GM12878 (cell line): ENCODE measurements at regions of chr2 and their contacts with region 1.

Region 1: GRCh38 chr2:10072656-10073480 is 7.3 kb downstream of the CYS1 start:
- DNase-seq: no peak
- ATAC-seq: peak; percentile 96
- H3K4me3 ChIP-seq: no peak overlapping the region
- H3K27ac ChIP-seq: no peak overlapping the region
- H3K4me1 ChIP-seq: peaks cover 21% of the 10 kb centered on the region
- H3K27me3 ChIP-seq: no peaks in the 10 kb centered on the region
- CTCF ChIP-seq: peak; percentile 84 to 94 (median 86); a peak in 5 of 6 replicates
- EP300 ChIP-seq: no peak
- POLR2A ChIP-seq: no peak
- RAD21 ChIP-seq: peak; percentile 92

Region 2: GRCh38 chr2:10091182-10091888 is 18.5 kb after region 1 on chr2:
- CTCF ChIA-PET with region 1: interaction called, 983 read pairs
- POLR2A ChIA-PET with region 1: interaction called, 73 read pairs
- RAD21 ChIA-PET with region 1: interaction called, 216 read pairs
- SMC1A ChIA-PET with region 1: interaction called, 236 read pairs
- in situ Hi-C with region 1: no loop called
- intact Hi-C with region 1: no loop called
- DNase-seq: no peak
- ATAC-seq: peak; percentile 71
- H3K4me3 ChIP-seq: no peak overlapping the region; the same call in 1 of the 2 replicates
- H3K27ac ChIP-seq: no peak overlapping the region
- H3K4me1 ChIP-seq: peaks cover 18% of the 10 kb centered on the region
- H3K27me3 ChIP-seq: no peaks in the 10 kb centered on the region
- CTCF ChIP-seq: peak in 1 of 3 experiments; percentile 29; a peak in 1 of 6 replicates
- EP300 ChIP-seq: no peak
- POLR2A ChIP-seq: no peak
- RAD21 ChIP-seq: no peak

Region 3: GRCh38 chr2:10097352-10098148 is 24.7 kb after region 1 on chr2:
- CTCF ChIA-PET with region 1: interaction called, 983 read pairs
- POLR2A ChIA-PET with region 1: interaction called, 73 read pairs
- RAD21 ChIA-PET with region 1: interaction called, 216 read pairs
- SMC1A ChIA-PET with region 1: interaction called, 236 read pairs
- in situ Hi-C with region 1: no loop called
- intact Hi-C with region 1: loop called (anchors 1 kb)
- DNase-seq: no peak
- ATAC-seq: peak; percentile 96
- H3K4me3 ChIP-seq: no peak overlapping the region
- H3K27ac ChIP-seq: no peak overlapping the region
- H3K4me1 ChIP-seq: peaks cover 2% of the 10 kb centered on the region; the same call in 1 of the 2 replicates
- H3K27me3 ChIP-seq: no peaks in the 10 kb centered on the region
- CTCF ChIP-seq: peak; percentile 91 to 99 (median 92)
- EP300 ChIP-seq: no peak
- POLR2A ChIP-seq: no peak
- RAD21 ChIP-seq: peak; percentile 80

Region 4: DNA sequence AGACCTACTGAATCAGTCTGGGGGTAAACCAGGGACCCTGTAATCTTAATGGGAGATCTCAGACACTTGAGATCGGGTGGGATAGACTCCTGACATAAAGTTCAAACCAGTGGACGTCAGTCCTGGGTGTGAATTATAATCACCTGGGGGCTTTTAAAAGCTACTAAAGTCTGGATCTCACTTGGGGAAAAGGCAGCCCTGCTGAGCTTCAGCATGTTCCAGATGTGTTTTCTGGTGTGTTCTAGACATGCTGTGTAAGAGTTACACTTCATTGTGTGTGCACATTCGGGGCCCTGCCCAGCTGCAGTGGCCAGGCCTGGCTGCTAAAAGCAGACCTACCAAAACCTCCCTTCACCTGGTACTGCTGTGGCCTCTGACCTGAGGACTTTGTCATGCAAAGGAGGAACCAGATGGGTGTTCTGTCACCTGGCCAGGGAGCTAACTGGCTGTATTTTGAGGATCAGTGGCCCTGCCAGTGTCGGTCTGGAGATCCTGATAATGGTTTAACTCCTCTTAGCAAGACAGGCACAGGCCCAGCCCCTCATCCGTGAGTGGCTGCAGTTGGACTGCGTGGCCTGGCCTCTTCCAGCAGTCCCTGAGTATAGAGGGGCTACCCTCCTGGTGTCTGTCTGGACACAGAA is 60.3 kb after region 1 on chr2:
- CTCF ChIA-PET with region 1: interaction called, 15 read pairs
- POLR2A ChIA-PET with region 1: interaction called, 4 read pairs
- RAD21 ChIA-PET with region 1: interaction called, 15 read pairs
- SMC1A ChIA-PET with region 1: interaction called, 11 read pairs
- in situ Hi-C with region 1: no loop called
- intact Hi-C with region 1: no loop called
- DNase-seq: no peak
- ATAC-seq: peak; percentile 8
- H3K4me3 ChIP-seq: no peak overlapping the region
- H3K27ac ChIP-seq: no peak overlapping the region
- H3K4me1 ChIP-seq: no peaks in the 10 kb centered on the region
- H3K27me3 ChIP-seq: no peaks in the 10 kb centered on the region
- CTCF ChIP-seq: no peak
- EP300 ChIP-seq: no peak
- POLR2A ChIP-seq: peak; percentile 66
- RAD21 ChIP-seq: no peak

Region 5: DNA sequence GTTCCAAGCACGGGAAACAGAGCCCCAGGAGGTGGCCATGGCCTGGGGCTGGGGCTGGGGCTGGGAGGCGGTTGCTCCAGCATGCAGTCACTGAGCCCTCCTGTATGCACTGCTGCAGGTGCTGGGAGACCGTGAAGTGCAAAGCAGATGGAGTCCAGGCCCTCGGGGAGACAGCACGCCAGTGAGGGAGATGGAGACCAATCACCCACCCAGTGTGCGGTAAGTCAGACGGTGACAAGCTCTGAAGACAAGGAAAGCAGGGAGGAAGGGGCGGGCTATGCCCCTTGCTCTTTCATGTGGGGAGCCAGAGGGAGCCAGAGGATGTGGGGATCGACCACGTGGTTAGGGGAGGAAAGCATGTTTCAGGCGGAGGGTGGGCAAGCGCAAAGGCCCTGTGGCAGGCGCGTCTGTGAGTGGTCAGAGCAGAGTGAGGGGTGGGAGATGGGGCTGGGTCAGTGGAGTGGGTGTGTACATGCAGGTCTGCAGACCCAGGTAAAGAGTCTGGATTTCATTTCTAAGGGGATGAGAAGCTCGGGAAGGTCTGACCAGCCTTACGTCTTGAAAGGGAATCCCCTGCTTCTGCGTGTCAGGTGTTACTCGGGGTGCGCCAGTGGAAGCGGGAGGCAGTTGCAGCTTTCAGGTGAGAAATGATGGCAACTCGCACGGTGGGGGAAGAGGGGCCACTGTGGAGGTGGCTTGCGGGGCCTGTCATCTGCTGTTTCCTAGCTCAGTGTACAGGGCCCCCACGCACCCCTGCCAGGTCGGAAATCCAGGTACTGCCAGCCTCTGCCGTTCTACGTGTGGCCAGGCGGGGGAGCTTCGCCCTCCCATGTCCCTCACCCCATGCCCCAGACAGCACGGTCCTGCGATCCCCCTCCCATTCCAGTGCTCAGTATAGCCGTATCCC is 69.1 kb after region 1 on chr2:
- CTCF ChIA-PET with region 1: interaction called, 5 read pairs
- POLR2A ChIA-PET with region 1: no interaction called
- RAD21 ChIA-PET with region 1: interaction called, 12 read pairs
- SMC1A ChIA-PET with region 1: interaction called, 3 read pairs
- in situ Hi-C with region 1: no loop called
- intact Hi-C with region 1: no loop called
- DNase-seq: no peak
- ATAC-seq: peak; percentile 88
- H3K4me3 ChIP-seq: no peak overlapping the region
- H3K27ac ChIP-seq: no peak overlapping the region
- H3K4me1 ChIP-seq: no peaks in the 10 kb centered on the region
- H3K27me3 ChIP-seq: no peaks in the 10 kb centered on the region
- CTCF ChIP-seq: peak; percentile 38 to 61 (median 49); a peak in 5 of 6 replicates
- EP300 ChIP-seq: no peak
- POLR2A ChIP-seq: no peak
- RAD21 ChIP-seq: peak; percentile 40

Region 6: GRCh38 chr2:10193851-10194820 is 121.3 kb after region 1 on chr2:
- CTCF ChIA-PET with region 1: no interaction called
- POLR2A ChIA-PET with region 1: no interaction called
- RAD21 ChIA-PET with region 1: no interaction called
- SMC1A ChIA-PET with region 1: no interaction called
- in situ Hi-C with region 1: no loop called
- intact Hi-C with region 1: no loop called
- DNase-seq: no peak
- ATAC-seq: no peak
- H3K4me3 ChIP-seq: no peak overlapping the region
- H3K27ac ChIP-seq: no peak overlapping the region
- H3K4me1 ChIP-seq: no peaks in the 10 kb centered on the region
- H3K27me3 ChIP-seq: no peaks in the 10 kb centered on the region
- CTCF ChIP-seq: no peak
- EP300 ChIP-seq: no peak
- POLR2A ChIP-seq: no peak
- RAD21 ChIP-seq: no peak

Region 7: GRCh38 chr2:10448208-10448645 is 375.4 kb after region 1 on chr2 and contains the start of gene ODC1:
- CTCF ChIA-PET with region 1: interaction called, 14 read pairs
- POLR2A ChIA-PET with region 1: interaction called, 3 read pairs
- RAD21 ChIA-PET with region 1: interaction called, 5 read pairs
- SMC1A ChIA-PET with region 1: interaction called, 5 read pairs
- in situ Hi-C with region 1: no loop called
- intact Hi-C with region 1: no loop called
- DNase-seq: peak; percentile 53
- ATAC-seq: peak; percentile 76
- H3K4me3 ChIP-seq: peak within 1 kb of the TSS; percentile 77
- H3K27ac ChIP-seq: peak within 1 kb of the TSS; percentile 93
- H3K4me1 ChIP-seq: peaks cover 25% of the 10 kb centered on the region
- H3K27me3 ChIP-seq: no peaks in the 10 kb centered on the region
- CTCF ChIP-seq: no peak
- EP300 ChIP-seq: no peak; a peak in 1 of 4 replicates
- POLR2A ChIP-seq: peak; percentile 87; the same call in 1 of the 2 replicates
- RAD21 ChIP-seq: no peak
- polyA plus RNA-seq, gene ODC1: 131 to 235 TPM

Region 8: DNA sequence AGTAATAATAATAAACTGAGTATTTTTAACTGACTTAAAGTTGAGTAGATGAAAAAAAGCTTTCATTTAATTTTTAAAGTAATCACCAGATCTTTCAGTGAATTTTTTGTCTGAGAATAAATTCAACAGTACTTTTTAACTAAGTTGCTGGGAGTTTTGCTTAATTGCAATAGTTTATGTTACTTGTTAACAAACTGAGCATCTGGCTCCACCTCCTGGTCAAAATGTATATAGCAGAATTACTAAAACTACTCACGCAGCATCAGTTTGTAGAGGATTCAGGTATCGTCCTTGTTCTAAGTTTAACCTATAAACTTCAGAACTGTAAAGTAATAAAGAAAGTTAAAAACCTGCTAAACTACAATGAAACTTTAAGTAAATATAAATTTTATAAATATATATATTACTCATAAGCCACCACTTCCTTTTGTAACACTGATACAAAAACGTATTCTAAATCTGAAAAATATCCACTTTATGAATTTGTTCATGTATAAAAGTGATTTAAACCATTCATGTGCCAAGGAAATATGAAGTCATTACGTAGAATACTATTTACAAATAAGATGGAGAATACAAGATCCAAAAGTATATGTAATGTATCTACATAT is 595.6 kb after region 1 on chr2:
- CTCF ChIA-PET with region 1: interaction called, 5 read pairs
- POLR2A ChIA-PET with region 1: no interaction called
- RAD21 ChIA-PET with region 1: no interaction called
- SMC1A ChIA-PET with region 1: no interaction called
- in situ Hi-C with region 1: loop called (anchors 5 kb)
- intact Hi-C with region 1: no loop called
- DNase-seq: peak; percentile 27
- ATAC-seq: peak; percentile 76
- H3K4me3 ChIP-seq: no peak overlapping the region
- H3K27ac ChIP-seq: no peak overlapping the region
- H3K4me1 ChIP-seq: no peaks in the 10 kb centered on the region
- H3K27me3 ChIP-seq: no peaks in the 10 kb centered on the region
- CTCF ChIP-seq: peak; percentile 51 to 65 (median 62)
- EP300 ChIP-seq: no peak
- POLR2A ChIP-seq: no peak
- RAD21 ChIP-seq: peak; percentile 61